ENCODE measurements at regions of chr4 and their contacts with region 1.

Region 1: GRCh38 chr4:10157478-10158332 is 41.1 kb upstream of the WDR1 start:
- DNase-seq: peak; percentile 55
- H3K4me3 Mint-ChIP-seq: no peak overlapping the region
- H3K27ac Mint-ChIP-seq: no peak overlapping the region
- H3K4me1 Mint-ChIP-seq: peaks cover 29% of the 10 kb centered on the region
- H3K27me3 Mint-ChIP-seq: peaks cover 2% of the 10 kb centered on the region

Region 2: GRCh38 chr4:9964879-9965278 is 192.8 kb before region 1 on chr4:
- CTCF ChIA-PET with region 1: no interaction called
- POLR2A ChIA-PET with region 1: no interaction called
- DNase-seq: no peak
- H3K4me3 Mint-ChIP-seq: no peak overlapping the region
- H3K27ac Mint-ChIP-seq: no peak overlapping the region
- H3K4me1 Mint-ChIP-seq: peaks cover 10% of the 10 kb centered on the region
- H3K27me3 Mint-ChIP-seq: peaks cover 8% of the 10 kb centered on the region

Region 3: DNA sequence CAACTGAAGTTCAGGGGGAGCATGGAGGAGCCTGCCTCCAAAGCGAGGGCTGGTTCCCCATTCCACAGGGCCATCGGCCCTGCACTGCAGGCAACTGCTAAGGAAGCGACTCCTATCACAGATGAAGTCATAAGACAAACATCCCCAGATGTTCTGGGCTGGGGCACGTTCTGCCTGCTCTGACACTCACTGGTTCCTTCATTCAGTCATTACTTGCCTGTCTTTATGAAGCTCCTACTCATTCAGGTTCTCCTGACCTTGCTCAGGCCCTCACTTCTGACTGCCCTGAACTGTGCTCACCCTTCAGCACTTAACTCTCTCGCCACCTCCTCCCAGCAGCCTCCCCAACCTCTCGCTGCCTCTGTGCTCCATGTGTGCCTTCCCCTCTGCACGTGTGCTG is 133.9 kb before region 1 on chr4:
- CTCF ChIA-PET with region 1: no interaction called
- POLR2A ChIA-PET with region 1: no interaction called
- DNase-seq: no peak
- H3K4me3 Mint-ChIP-seq: no peak overlapping the region
- H3K27ac Mint-ChIP-seq: no peak overlapping the region
- H3K4me1 Mint-ChIP-seq: peaks cover 10% of the 10 kb centered on the region
- H3K27me3 Mint-ChIP-seq: peaks cover 11% of the 10 kb centered on the region

Region 4: DNA sequence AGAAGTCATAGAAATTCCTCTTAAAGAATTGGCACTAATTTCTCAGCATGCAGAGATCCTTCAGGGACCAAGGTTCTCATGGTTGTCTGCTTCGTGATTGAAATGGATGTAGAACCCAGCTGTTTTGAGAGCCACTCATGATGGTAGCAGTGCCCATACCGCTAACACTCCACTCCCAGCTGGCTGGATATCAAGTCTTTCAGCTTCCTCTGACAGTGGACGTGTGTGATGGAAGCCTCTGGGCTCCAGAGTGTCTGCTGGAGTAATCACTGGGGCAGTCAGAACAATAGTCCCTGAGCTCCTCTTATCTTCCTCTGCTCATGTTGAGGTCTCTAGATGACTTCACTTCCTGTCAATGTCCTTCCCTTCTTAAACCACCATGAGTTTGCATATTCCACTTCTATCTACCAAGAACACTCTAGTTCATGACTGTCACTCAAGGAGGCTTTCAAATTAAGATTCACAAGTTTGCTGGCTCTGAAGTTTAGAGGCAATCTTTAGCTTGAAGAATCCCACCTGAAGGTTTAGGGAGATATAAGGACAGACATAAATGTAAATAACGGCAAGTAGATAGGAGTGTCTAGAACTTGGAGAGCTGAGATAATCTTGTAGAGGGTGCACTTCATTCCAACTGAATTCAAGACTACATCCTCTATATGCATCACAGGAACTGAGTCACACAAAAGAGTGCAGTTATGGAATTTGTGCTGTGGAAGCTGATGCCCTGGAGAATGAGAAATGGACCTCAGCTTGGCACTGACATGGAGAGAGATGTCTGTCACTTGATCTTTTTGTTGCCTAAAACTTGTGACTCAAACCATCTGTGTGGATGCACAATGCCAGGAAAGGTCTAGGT is 23.4 kb after region 1 on chr4:
- CTCF ChIA-PET with region 1: interaction called, 15 read pairs
- POLR2A ChIA-PET with region 1: interaction called, 3 read pairs
- DNase-seq: peak; percentile 58
- H3K4me3 Mint-ChIP-seq: no peak overlapping the region
- H3K27ac Mint-ChIP-seq: peak overlapping the region; percentile 90
- H3K4me1 Mint-ChIP-seq: peaks cover 49% of the 10 kb centered on the region
- H3K27me3 Mint-ChIP-seq: no peaks in the 10 kb centered on the region

Region 5: DNA sequence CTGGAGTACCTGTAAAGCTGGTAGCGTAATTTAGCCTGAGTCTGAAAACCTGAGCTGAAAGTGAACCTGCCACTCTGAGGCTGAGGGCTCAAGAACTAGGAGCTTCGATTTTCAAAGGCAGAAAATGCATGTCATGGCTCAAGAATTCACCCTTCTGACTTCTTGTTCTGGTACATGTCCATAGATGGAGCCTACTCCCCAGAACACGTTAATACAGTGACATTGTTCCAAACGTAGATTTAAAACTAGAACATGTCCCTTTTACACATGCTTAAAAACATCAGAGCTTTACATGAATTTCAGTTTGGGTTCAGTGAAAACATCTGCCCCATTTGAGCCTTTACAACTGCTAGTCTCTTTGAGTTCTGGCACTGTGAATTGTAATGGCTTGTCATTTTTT is 74.4 kb after region 1 on chr4:
- CTCF ChIA-PET with region 1: no interaction called
- POLR2A ChIA-PET with region 1: no interaction called
- DNase-seq: no peak
- H3K4me3 Mint-ChIP-seq: no peak overlapping the region
- H3K27ac Mint-ChIP-seq: no peak overlapping the region
- H3K4me1 Mint-ChIP-seq: no peaks in the 10 kb centered on the region
- H3K27me3 Mint-ChIP-seq: no peaks in the 10 kb centered on the region

Region 6: GRCh38 chr4:10403633-10404445 is 246.1 kb after region 1 on chr4:
- CTCF ChIA-PET with region 1: interaction called, 61 read pairs
- POLR2A ChIA-PET with region 1: no interaction called
- DNase-seq: no peak
- H3K4me3 Mint-ChIP-seq: no peak overlapping the region
- H3K27ac Mint-ChIP-seq: no peak overlapping the region
- H3K4me1 Mint-ChIP-seq: no peaks in the 10 kb centered on the region
- H3K27me3 Mint-ChIP-seq: peaks cover 4% of the 10 kb centered on the region

Region 7: DNA sequence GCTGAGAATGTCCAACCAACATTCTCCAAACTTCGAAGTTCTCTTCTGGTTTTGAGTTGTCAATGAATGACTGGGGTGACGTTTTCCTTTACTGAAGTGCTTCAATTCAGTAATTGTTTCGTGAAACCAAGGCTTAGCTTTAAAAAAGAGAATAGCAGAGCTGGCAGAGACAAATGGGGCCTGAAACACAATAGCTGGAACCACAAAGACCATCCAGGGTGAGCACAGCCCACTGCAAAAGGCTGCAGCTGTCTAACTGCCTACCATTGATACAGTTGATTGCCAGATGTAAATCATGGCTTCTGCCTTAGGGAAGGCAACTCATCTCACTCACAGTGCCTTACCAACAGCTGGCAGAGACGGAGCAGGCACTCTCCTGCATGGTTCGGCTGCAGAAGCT is 378.2 kb after region 1 on chr4:
- CTCF ChIA-PET with region 1: interaction called, 43 read pairs
- POLR2A ChIA-PET with region 1: no interaction called
- DNase-seq: no peak
- H3K4me3 Mint-ChIP-seq: no peak overlapping the region
- H3K27ac Mint-ChIP-seq: no peak overlapping the region
- H3K4me1 Mint-ChIP-seq: no peaks in the 10 kb centered on the region
- H3K27me3 Mint-ChIP-seq: peaks cover 3% of the 10 kb centered on the region

Region 8: GRCh38 chr4:10554694-10555093 is 397.0 kb after region 1 on chr4:
- CTCF ChIA-PET with region 1: interaction called, 14 read pairs
- POLR2A ChIA-PET with region 1: no interaction called
- DNase-seq: peak; percentile 35
- H3K4me3 Mint-ChIP-seq: no peak overlapping the region
- H3K27ac Mint-ChIP-seq: no peak overlapping the region
- H3K4me1 Mint-ChIP-seq: no peaks in the 10 kb centered on the region
- H3K27me3 Mint-ChIP-seq: peaks cover 5% of the 10 kb centered on the region